Right ventricle myocardium superior (tissue), 1 donor: ENCODE measurements at regions of chr1 and their contacts with region 1.

Region 1: DNA sequence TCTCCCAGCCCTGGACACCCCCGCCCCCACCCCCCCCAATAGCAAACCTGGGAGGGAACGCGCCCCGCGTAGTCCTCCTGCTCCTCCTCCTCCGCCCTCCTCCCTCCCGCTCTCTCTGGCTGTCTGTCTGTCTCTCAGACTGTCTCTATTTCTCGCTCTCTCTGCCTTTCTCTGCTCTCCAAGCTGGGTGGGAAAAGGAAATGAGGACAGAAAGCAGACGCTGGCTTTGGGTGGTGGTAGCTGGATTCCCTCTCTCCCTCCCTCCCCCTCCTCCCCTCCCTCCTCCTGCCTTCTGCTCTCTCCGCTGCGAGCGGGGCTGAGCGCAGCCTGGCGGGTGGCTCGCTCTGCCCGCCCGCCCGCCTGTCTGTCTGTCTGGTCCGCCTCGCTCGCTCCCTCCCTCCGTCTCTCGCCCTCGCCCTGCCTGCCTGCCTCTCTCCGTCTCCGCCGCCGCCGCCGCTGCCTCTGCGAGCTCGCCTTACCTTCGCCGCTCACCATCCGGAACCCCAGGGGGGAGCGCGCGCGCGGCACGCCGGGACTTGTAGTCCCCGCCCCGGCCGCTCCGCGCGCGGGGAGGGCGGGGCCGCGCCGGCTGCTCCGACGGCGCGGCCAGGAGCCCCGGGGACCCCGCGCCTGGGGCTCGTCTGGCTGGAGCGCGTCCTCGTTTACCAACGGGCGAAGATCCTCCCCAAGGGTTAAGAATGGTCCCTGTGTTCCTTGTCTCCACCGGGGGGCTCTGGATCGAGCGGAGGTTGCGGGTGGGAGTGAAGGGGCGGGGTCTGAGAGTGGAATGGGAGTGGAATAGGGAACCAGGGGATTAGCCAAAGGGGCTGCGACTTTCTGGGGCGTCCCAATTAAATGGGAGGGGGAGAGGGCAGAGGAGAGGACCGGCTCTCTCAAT is at the start of gene AHDC1:
- DNase-seq: peak; percentile 96
- ATAC-seq: peak; percentile 75
- total RNA-seq, gene AHDC1: 47.4 TPM

Region 2: DNA sequence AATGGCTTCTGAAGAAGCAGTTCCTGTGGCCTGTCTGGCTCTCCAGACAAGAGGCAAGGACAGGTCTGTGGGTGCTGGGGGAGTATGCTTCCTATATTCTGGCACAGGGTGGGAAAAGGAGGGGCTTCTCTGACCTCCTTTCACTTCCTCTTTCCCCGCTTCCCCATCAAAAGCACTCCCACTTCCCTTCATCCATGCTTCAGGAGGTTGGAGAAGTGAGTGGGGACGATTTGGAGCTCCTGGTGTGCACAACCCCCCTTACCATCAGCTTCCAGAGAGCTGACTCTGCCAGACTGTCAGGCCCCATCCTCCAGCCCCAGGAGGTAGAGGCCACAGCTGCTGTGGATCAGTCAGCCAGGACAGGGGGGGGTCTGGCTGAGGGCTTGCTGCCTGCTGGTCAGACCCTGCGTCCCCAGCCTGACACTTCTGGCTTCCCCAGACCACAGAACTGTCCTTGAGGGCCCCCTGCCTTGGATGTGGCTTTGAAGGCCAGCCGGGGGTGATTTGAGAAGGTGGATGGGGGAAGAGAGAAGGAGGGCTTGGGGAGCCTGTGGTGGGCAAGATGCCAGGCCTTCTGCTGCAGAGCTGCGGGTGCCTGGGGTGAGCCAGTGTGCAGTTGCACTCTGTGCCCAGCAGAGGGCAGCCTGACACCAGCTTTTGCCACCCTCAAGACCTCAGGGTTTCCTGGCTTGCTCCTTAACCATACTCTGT is 303.4 kb before region 1 on chr1:
- intact Hi-C with region 1: loop called (anchors 5 kb)
- DNase-seq: peak; percentile 91
- ATAC-seq: peak; percentile 86

Region 3: GRCh38 chr1:27402349-27402754 is 201.6 kb before region 1 on chr1:
- intact Hi-C with region 1: loop called (anchors 5 kb)
- DNase-seq: peak; percentile 84
- ATAC-seq: peak; percentile 59

Region 4: DNA sequence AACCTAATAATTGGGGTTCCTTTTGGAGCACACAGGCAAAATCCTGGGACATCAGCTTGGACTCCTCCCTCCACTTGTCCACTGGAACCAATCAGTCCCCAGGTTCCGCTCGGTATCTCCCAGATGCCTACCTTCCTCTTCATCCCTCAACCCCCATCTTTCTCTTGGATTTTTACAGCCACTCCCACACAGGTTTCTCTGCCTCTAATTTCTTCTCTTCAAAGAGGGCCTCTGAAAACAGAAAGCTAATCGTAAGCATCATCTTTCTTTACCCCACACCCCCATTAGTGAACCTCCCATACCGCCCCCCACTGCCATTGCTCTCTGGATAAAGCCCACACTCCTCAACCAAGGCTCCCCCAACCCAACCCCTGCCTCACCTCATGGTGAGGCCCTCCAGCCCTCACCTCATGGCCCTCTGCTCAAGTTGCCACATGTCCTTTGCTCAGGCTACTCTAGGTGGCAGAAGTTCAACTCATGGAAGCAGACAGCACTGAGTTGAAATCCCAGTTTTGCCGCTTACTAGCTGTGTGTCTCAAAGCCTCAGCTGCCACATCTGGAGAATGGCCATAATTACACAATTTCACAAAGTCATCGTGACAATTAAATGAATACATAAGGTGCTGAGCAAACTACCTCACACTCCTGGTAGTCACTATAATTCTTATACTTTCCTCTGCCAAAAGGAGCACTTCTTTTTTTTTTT is 95.8 kb before region 1 on chr1:
- intact Hi-C with region 1: no loop called
- DNase-seq: no peak
- ATAC-seq: no peak

Region 5: GRCh38 chr1:27519331-27520258 is 84.3 kb before region 1 on chr1:
- intact Hi-C with region 1: no loop called
- DNase-seq: peak; percentile 69
- ATAC-seq: peak; percentile 47

Region 6: GRCh38 chr1:27556781-27557595 is 46.9 kb before region 1 on chr1:
- intact Hi-C with region 1: loop called (anchors 5 kb)
- DNase-seq: peak; percentile 95
- ATAC-seq: peak; percentile 56

Region 7: DNA sequence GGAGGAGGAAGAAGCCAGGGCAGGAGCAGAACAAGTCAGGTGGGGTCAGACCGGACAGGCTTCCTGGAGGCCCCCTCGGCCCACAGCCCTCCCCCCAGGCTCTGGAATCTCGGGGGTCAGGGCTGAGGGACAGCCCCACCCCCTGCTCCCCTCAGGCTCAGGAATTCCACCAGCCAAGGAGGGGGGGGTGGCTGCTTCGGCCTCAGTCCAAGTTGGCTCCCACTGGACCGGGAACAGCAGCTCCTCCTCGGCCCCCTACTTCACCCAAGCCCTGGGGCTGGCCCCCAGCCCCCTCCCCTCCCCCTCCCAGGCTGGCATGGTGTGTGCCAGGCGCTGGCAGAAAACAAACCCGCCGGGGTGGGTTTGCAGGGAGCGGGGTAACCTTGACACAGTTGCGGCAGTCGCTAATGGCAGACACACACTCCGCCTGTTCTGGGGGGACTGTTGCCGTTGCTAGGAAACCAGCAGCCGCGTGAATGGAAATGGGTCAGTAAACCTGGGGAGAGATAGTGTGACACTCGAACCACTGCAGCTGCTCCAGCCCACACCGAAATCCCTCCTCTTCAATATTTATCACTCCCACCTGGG is 32.4 kb before region 1 on chr1:
- intact Hi-C with region 1: loop called (anchors 2 kb)
- DNase-seq: peak; percentile 55
- ATAC-seq: no peak